Esophagus muscularis mucosa (tissue), 4 donors: ENCODE measurements at regions of chr11 and their contacts with region 1.

Region 1: DNA sequence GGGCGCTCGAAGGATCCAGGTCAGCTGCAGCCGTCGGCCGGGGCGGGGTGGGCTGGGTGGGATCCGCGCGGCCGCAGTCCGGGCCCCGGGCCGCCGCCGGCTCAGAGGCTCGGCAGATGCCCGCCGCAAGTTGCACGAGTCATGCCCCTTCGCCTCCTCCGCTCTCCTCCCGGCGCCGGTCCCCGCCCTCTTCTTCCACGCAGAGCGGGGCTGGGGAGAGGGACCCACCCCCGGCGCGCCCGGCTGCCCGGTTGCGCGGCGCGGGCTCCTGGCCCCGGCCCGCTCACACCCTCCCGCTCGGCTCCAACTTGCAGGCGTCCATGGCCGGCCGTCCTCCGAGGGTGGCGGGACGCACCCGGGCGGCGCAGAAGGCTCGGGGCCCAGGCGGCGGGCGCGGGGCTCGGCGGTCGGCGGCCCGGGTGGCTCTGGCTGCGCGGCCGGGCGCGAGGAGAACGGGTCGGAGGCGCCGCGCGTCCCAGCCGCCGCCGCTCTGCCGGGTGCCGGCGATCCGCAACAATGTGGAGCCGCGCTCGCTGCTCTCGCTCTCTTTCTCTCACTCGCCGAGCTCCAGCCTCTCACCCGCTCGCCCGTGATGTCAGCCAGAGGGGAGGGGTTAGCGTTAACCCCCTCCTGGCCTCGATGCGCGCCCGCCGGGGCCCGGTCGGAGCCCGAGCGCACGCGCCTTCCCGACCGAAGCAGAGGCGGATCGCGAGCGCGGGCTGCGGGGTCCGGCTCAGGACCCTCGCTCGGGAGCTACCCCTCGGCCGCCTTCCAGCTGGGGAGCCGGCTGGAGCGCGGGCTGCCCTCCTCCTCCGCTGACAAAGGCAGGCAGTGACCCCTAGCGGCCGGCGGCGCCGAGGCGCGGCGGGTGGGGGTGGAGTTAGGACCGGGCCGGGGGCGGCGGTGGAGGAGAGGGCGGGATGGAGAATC is at the start of gene NECTIN1:
- DNase-seq: peak; percentile 97
- H3K4me3 ChIP-seq: peak within 1 kb of the TSS; percentile 80 to 97 (median 84)
- H3K27ac ChIP-seq: peak within 1 kb of the TSS; percentile 87 to 93 (median 89)
- H3K4me1 ChIP-seq: peaks cover 13 to 36% (median 34%) of the 10 kb centered on the region in 4 donors
- H3K27me3 ChIP-seq: no peaks in the 10 kb centered on the region
- CTCF ChIP-seq: peak; percentile 84 to 98 (median 98)
- EP300 ChIP-seq: no peak
- POLR2A ChIP-seq: no peak
- total RNA-seq, gene NECTIN1: 1.7 to 4.0 (median 2.5) TPM

Region 2: GRCh38 chr11:119169282-119169719 is 559.6 kb before region 1 on chr11:
- intact Hi-C with region 1: no loop called
- DNase-seq: no peak
- H3K4me3 ChIP-seq: peak overlapping the region; percentile 82 to 94 (median 88)
- H3K27ac ChIP-seq: peak overlapping the region; percentile 96 to 99 (median 96)
- H3K4me1 ChIP-seq: peaks cover 10 to 17% (median 11%) of the 10 kb centered on the region in 4 donors
- H3K27me3 ChIP-seq: no peaks in the 10 kb centered on the region
- CTCF ChIP-seq: no peak
- EP300 ChIP-seq: no peak
- POLR2A ChIP-seq: peak; percentile 22

Region 3: GRCh38 chr11:119284344-119285157 is 444.4 kb before region 1 on chr11:
- intact Hi-C with region 1: no loop called
- DNase-seq: no peak
- H3K4me3 ChIP-seq: no peak overlapping the region
- H3K27ac ChIP-seq: no peak overlapping the region
- H3K4me1 ChIP-seq: peaks cover 0 to 22% (median 8%) of the 10 kb centered on the region in 4 donors
- H3K27me3 ChIP-seq: no peaks in the 10 kb centered on the region
- CTCF ChIP-seq: peak; percentile 35 to 60 (median 53)
- EP300 ChIP-seq: no peak
- POLR2A ChIP-seq: no peak

Region 4: DNA sequence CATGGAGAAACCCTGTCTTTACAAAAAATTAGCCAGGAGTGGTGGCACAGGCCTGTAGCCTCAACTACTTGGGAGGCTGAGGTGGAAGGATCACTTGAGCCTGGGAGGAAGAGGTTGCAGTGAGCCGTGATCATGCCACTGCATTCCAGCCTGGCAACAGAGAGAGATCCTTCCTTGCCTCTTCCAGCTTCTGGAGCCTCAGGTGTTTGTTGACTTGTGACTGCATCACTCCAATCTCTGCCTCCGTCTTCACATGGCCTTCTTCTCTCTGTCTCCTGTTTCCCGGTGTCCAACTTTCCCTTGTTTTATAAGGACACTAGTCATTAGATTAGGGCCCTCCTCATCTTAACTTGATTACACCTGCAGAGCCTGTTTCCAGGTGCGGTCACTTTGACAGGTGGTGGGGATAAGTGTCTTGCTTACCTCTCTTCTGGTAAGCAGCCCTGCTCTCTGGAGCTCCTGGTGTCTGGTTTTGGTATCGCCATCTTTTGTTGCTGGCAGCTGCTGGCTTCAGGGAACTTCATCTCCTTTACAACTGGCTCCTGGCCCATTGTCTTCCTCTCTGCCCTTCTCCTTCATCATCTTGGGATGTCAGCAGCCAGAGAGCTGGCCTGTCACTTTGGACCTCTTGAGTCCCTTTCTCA is 339.2 kb before region 1 on chr11:
- intact Hi-C with region 1: no loop called
- DNase-seq: no peak
- H3K4me3 ChIP-seq: no peak overlapping the region
- H3K27ac ChIP-seq: no peak overlapping the region
- H3K4me1 ChIP-seq: no peaks in the 10 kb centered on the region
- H3K27me3 ChIP-seq: no peaks in the 10 kb centered on the region
- CTCF ChIP-seq: no peak
- EP300 ChIP-seq: no peak
- POLR2A ChIP-seq: no peak

Region 5: DNA sequence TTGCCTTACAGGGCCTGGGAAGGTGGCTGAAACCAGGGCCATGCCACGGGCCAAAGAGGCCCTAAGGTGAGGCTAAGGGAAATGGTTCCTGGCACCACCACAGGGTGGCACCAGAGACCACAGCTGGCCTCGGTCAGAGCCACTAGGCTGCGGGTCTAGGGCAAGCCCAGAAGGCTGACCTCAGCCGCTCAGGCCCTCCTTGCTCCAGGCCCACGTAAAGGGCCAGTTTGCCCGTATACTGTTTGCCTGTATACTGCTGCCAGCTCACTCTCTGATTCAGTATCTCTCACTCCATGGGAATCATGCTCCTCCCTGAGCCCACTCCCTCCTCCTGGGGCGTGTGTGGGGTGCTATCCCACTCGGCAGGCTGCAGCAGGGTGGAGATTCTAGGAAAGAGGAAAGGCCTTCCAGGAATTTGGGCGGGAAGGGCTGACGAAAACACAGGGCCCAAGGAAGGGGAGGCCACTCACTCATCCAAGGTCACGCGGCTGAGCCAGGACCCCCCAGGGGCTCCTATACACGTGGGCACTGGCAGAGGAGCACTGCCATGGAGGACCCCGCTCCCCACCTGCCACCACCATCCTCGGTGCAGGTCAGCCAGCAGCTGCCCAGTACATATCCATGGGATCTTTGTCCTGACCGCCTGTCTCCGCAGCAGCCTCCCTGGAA is 62.3 kb before region 1 on chr11:
- intact Hi-C with region 1: loop called (anchors 5 kb)
- DNase-seq: no peak
- H3K4me3 ChIP-seq: no peak overlapping the region
- H3K27ac ChIP-seq: no peak overlapping the region
- H3K4me1 ChIP-seq: peaks cover 11 to 19% (median 16%) of the 10 kb centered on the region in 4 donors
- H3K27me3 ChIP-seq: no peaks in the 10 kb centered on the region
- CTCF ChIP-seq: peak; percentile 86 to 96 (median 91)
- EP300 ChIP-seq: no peak
- POLR2A ChIP-seq: no peak

Region 6: GRCh38 chr11:119919656-119920055 is 190.7 kb after region 1 on chr11:
- intact Hi-C with region 1: no loop called
- DNase-seq: no peak
- H3K4me3 ChIP-seq: no peak overlapping the region
- H3K27ac ChIP-seq: no peak overlapping the region
- H3K4me1 ChIP-seq: no peaks in the 10 kb centered on the region
- H3K27me3 ChIP-seq: peaks cover 0 to 46% (median 3%) of the 10 kb centered on the region in 4 donors
- CTCF ChIP-seq: no peak
- EP300 ChIP-seq: no peak
- POLR2A ChIP-seq: no peak

Region 7: GRCh38 chr11:120108154-120108865 is 379.4 kb after region 1 on chr11:
- intact Hi-C with region 1: loop called (anchors 5 kb)
- DNase-seq: no peak
- H3K4me3 ChIP-seq: no peak overlapping the region
- H3K27ac ChIP-seq: no peak overlapping the region
- H3K4me1 ChIP-seq: peaks cover 0 to 4% (median 0%) of the 10 kb centered on the region in 4 donors
- H3K27me3 ChIP-seq: peaks cover 0 to 25% (median 0%) of the 10 kb centered on the region in 4 donors
- CTCF ChIP-seq: peak; percentile 94 to 100 (median 98)
- EP300 ChIP-seq: no peak
- POLR2A ChIP-seq: no peak